ENCODE measurements at regions of chr5 and their contacts with region 1.

Region 1: GRCh38 chr5:78376315-78376714 is 15.9 kb downstream of the SCAMP1 start:
- DNase-seq: no peak
- H3K4me3 ChIP-seq: no peak overlapping the region
- H3K4me3 Mint-ChIP-seq: no peak overlapping the region
- H3K27ac Mint-ChIP-seq: no peak overlapping the region
- H3K4me1 ChIP-seq: no peaks in the 10 kb centered on the region
- H3K4me1 Mint-ChIP-seq: no peaks in the 10 kb centered on the region
- H3K27me3 ChIP-seq: no peaks in the 10 kb centered on the region
- H3K27me3 Mint-ChIP-seq: no peaks in the 10 kb centered on the region
- CTCF ChIP-seq: no peak

Region 2: GRCh38 chr5:78280261-78280660 is 96.1 kb before region 1 on chr5:
- CTCF ChIA-PET with region 1: no interaction called
- POLR2A ChIA-PET with region 1: interaction called, 12 read pairs
- intact Hi-C with region 1: no loop called
- DNase-seq: no peak
- H3K4me3 ChIP-seq: no peak overlapping the region
- H3K4me3 Mint-ChIP-seq: no peak overlapping the region
- H3K27ac Mint-ChIP-seq: no peak overlapping the region
- H3K4me1 ChIP-seq: peaks cover 12% of the 10 kb centered on the region
- H3K4me1 Mint-ChIP-seq: peaks cover 20% of the 10 kb centered on the region
- H3K27me3 ChIP-seq: no peaks in the 10 kb centered on the region
- H3K27me3 Mint-ChIP-seq: no peaks in the 10 kb centered on the region
- CTCF ChIP-seq: no peak

Region 3: GRCh38 chr5:78757269-78758053 is 381.1 kb after region 1 on chr5:
- CTCF ChIA-PET with region 1: no interaction called
- POLR2A ChIA-PET with region 1: no interaction called
- intact Hi-C with region 1: no loop called
- DNase-seq: peak in 1 of 2 experiments; percentile 15
- H3K4me3 ChIP-seq: no peak overlapping the region
- H3K4me3 Mint-ChIP-seq: no peak overlapping the region
- H3K27ac Mint-ChIP-seq: peak overlapping the region; percentile 71
- H3K4me1 ChIP-seq: peaks cover 28% of the 10 kb centered on the region
- H3K4me1 Mint-ChIP-seq: peaks cover 35% of the 10 kb centered on the region
- H3K27me3 ChIP-seq: no peaks in the 10 kb centered on the region; the same call in 1 of the 2 replicates
- H3K27me3 Mint-ChIP-seq: no peaks in the 10 kb centered on the region
- CTCF ChIP-seq: no peak

Measured in Caco-2 (cell line).